ENCODE measurements at regions of chr10 and their contacts with region 1.

Region 1: GRCh38 chr10:80382989-80383388 is 25.4 kb upstream of the PRXL2A start:
- DNase-seq: peak; percentile 55
- H3K4me3 Mint-ChIP-seq: no peak overlapping the region
- H3K27ac Mint-ChIP-seq: no peak overlapping the region
- H3K4me1 Mint-ChIP-seq: peaks cover 7% of the 10 kb centered on the region
- H3K27me3 Mint-ChIP-seq: no peaks in the 10 kb centered on the region
- CTCF ChIP-seq: peak; percentile 62

Region 2: DNA sequence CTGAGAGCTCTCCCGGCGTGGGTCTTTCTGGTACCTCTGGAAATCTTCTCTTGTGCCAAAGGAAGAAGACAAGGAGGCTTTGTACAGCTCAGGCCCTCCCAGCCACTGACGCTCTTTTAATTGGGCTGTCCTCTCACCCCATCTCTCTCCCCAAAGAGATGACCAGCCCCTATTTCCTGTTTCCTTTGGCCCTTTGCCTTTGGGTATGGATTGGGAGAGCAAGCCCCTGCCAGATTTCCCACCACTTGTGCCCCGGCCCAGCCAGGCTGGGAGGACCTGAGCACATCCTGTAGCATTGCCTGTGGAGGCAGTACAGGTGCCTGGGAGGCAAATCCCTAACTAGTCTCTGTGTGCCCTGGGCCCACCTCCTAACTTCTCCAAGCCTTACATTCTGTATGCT is 256.1 kb before region 1 on chr10:
- CTCF ChIA-PET with region 1: no interaction called
- intact Hi-C with region 1: no loop called
- DNase-seq: no peak
- H3K4me3 Mint-ChIP-seq: no peak overlapping the region
- H3K27ac Mint-ChIP-seq: no peak overlapping the region
- H3K4me1 Mint-ChIP-seq: no peaks in the 10 kb centered on the region
- H3K27me3 Mint-ChIP-seq: peaks cover 43% of the 10 kb centered on the region
- CTCF ChIP-seq: no peak

Region 3: DNA sequence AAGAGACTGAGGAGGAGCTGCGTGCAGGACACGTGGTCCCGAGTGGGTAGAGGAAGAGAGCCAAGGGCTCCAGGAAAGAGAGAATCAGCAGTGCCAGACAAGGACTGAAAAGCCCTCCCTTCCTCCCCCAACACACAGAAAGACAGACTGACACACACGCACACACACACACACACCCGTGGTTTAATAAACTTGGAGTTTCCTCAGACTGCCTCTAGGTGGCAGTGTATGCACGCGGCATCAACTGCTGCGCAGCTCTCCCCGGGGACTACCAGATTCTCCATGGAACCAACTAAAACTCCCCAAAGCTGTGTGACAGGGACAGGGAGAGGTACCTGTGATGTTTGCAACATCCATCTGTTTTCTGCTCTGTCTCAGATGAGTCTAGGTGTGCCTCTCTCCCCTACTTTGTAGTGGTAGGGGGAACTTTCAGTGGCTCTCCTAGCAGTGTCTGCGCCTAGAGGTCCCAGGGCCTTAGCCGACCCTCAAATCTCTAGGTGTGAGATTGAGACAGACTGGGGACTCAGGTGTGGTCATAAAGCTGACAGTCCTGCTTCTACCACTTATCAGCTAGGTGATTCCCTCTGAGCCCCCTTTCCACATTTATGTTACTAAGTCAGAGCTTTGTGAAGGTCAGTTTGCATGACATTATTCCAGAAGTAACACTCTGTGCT is 61.8 kb after region 1 on chr10:
- CTCF ChIA-PET with region 1: interaction called, 7 read pairs
- intact Hi-C with region 1: loop called (anchors 1 kb)
- DNase-seq: peak; percentile 66
- H3K4me3 Mint-ChIP-seq: no peak overlapping the region
- H3K27ac Mint-ChIP-seq: no peak overlapping the region
- H3K4me1 Mint-ChIP-seq: peaks cover 31% of the 10 kb centered on the region
- H3K27me3 Mint-ChIP-seq: peaks cover 20% of the 10 kb centered on the region
- CTCF ChIP-seq: peak; percentile 73

Region 4: DNA sequence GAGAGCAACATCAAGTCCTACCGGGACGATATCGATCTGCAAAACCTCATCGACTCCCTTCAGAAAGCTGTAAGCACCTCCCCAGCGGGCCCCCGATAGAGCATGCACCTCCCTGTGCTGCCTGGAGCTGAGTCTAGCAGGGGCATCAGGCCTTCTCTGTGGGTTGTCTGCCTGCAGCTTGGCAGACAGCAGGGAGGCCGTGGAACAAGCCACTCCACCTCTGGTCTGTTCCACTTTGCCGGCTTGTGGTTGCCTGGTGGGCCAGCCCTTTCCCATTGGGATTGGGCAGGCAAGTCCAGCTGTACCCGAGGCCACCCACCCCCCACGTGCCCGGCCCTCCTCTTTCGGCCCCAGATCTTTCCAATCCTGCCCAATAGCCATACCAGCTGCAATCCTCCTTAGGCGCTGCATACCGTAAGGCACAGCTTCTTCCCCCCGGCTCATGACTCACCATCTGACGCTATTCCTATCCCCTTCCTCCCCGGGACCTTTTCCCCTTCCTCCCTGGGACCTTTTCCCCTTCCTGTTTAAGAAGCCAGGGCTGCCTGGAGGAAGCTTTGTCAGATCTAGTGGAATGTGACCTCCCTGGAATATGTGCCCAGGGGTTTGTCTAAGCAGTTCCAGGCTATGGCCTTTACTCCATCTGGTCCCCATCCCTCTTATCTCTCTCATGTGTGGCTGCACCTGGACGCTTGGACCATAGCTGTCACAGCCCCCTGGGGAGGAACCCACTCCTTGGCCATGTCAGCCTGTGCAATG is 126.6 kb after region 1 on chr10:
- CTCF ChIA-PET with region 1: interaction called, 14 read pairs
- intact Hi-C with region 1: loop called (anchors 5 kb)
- DNase-seq: peak; percentile 78
- H3K4me3 Mint-ChIP-seq: peak overlapping the region; percentile 44
- H3K27ac Mint-ChIP-seq: peak overlapping the region; percentile 82
- H3K4me1 Mint-ChIP-seq: peaks cover 80% of the 10 kb centered on the region
- H3K27me3 Mint-ChIP-seq: no peaks in the 10 kb centered on the region
- CTCF ChIP-seq: no peak

Region 5: DNA sequence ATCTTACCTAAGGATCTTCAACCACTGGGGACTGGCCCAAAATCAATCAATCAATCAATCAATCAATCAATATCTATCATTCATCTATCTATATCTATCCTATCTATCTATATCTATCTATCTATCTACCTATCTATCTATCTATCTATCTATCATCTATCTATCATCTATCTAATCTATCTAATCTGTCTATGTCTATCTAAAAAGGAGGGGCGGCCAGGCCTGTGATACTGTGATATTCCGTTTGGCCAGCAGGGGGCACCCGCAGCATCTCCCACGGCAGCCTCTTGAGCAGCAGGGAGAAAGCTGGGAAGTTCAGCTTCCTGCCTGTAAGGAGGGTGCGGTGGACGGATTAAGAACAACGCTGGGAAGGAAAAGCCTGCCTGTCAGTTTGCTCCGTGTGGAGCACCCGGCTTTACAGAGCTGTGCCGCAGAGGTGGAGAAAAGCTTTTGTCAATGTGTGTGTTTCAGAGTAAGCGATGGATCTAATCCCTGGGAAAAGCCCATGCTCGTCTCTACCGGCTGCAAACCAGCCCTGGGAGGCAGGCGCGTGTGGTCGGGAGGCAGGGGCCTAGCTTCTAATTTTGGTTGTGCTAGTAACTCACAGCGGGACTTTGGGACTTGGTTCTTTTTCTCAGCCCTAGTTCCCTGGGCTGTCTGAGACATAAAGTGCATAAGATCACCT is 279.7 kb after region 1 on chr10:
- CTCF ChIA-PET with region 1: interaction called, 8 read pairs
- intact Hi-C with region 1: loop called (anchors 2 kb)
- DNase-seq: peak; percentile 93
- H3K4me3 Mint-ChIP-seq: peak overlapping the region; percentile 43
- H3K27ac Mint-ChIP-seq: peak overlapping the region; percentile 18
- H3K4me1 Mint-ChIP-seq: peaks cover 10% of the 10 kb centered on the region
- H3K27me3 Mint-ChIP-seq: peaks cover 61% of the 10 kb centered on the region
- CTCF ChIP-seq: peak; percentile 89

Region 6: GRCh38 chr10:81018708-81019365 is 635.8 kb after region 1 on chr10:
- CTCF ChIA-PET with region 1: no interaction called
- intact Hi-C with region 1: loop called (anchors 10 kb)
- DNase-seq: peak; percentile 52
- H3K4me3 Mint-ChIP-seq: peak overlapping the region; percentile 16
- H3K27ac Mint-ChIP-seq: no peak overlapping the region
- H3K4me1 Mint-ChIP-seq: peaks cover 8% of the 10 kb centered on the region
- H3K27me3 Mint-ChIP-seq: no peaks in the 10 kb centered on the region
- CTCF ChIP-seq: peak; percentile 76